Activated CD4-positive, alpha-beta T cell treated with anti-CD3 and anti-CD28 coated beads, Interleukin-2, amount 10 ng/mL, durations not matched to agents 24 days and 14 days (primary cell): ENCODE measurements at regions of chr2 and their contacts with region 1.

Region 1: DNA sequence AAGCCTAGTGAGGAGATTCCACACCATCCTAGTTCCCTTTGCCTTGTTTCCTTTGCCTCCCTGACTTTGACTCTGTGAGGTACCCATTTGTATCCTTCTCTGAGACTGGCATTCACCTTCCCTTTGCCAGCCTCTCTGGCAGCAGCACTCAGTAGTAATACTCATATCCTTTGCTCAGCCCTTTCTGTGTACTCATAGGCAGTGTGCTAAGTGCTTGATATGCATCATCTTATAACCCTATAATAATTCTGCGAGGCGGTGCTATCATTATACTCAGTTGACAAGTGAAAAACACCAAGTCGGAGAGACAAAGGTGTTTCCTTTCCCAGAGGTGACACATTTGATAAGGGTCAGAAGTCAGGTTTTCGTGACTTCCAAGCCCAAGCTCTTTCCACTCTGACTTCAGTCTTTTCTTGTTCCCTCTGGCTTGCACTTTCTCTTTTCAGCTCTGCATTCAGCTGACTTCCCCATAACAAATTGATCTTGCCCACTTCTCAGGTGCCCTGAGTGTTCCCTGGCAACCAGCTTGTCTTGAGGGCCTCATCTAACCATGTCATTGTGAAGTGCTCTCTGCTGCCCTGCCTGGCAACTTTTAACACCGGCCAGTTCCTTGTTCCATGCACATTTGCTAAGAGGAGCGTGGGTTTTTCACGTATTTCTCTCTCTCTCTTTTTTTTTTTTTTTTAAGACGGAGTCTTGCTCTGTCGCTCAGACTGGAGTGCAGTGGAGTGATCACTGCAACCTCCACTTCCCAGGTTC is 94.5 kb upstream of the UPP2 start:
- DNase-seq: peak; percentile 63
- H3K4me3 Mint-ChIP-seq: no peak overlapping the region
- H3K27ac Mint-ChIP-seq: no peak overlapping the region
- H3K4me1 Mint-ChIP-seq: peaks cover 18% of the 10 kb centered on the region
- H3K27me3 Mint-ChIP-seq: peaks cover 3% of the 10 kb centered on the region

Region 2: GRCh38 chr2:157492189-157492773 is 514.9 kb before region 1 on chr2:
- intact Hi-C with region 1: loop called (anchors 2 kb)
- DNase-seq: peak; percentile 91
- H3K4me3 Mint-ChIP-seq: no peak overlapping the region
- H3K27ac Mint-ChIP-seq: no peak overlapping the region
- H3K4me1 Mint-ChIP-seq: peaks cover 56% of the 10 kb centered on the region
- H3K27me3 Mint-ChIP-seq: no peaks in the 10 kb centered on the region

Region 3: GRCh38 chr2:157596992-157597681 is 410.0 kb before region 1 on chr2:
- intact Hi-C with region 1: loop called (anchors 5 kb)
- DNase-seq: peak; percentile 86
- H3K4me3 Mint-ChIP-seq: peak overlapping the region; percentile 73
- H3K27ac Mint-ChIP-seq: no peak overlapping the region
- H3K4me1 Mint-ChIP-seq: peaks cover 7% of the 10 kb centered on the region
- H3K27me3 Mint-ChIP-seq: peaks cover 35% of the 10 kb centered on the region

Region 4: GRCh38 chr2:157628477-157629415 is 378.4 kb before region 1 on chr2 and contains the start of gene ACVR1C:
- intact Hi-C with region 1: loop called (anchors 2 kb)
- DNase-seq: peak; percentile 90
- H3K4me3 Mint-ChIP-seq: peak within 1 kb of the TSS; percentile 91
- H3K27ac Mint-ChIP-seq: peak within 1 kb of the TSS; percentile 66
- H3K4me1 Mint-ChIP-seq: peaks cover 24% of the 10 kb centered on the region
- H3K27me3 Mint-ChIP-seq: peaks cover 27% of the 10 kb centered on the region
- total RNA-seq, gene ACVR1C: 0.98 and 1.0 TPM in 2 replicates

Region 5: DNA sequence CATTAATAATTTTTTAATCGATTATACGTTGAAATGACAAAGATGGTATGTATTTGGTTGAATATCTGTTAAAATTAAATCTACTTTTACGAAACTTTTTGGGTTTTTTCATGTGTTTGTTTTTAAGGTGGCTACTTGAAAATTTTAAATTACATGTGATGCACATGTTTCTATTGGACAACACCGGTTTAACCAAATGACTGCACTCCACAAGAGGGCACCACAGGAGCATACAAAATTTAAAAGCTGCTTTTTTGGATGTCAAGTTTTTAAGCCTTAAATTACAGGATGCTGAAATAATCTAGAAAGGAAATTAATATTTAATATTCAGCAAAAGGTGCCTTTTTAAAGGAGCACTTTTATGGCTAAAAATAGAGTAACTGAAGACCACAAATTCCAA is 229.7 kb before region 1 on chr2:
- intact Hi-C with region 1: loop called (anchors 1 kb)
- DNase-seq: peak; percentile 85
- H3K4me3 Mint-ChIP-seq: no peak overlapping the region
- H3K27ac Mint-ChIP-seq: no peak overlapping the region
- H3K4me1 Mint-ChIP-seq: peaks cover 29% of the 10 kb centered on the region
- H3K27me3 Mint-ChIP-seq: no peaks in the 10 kb centered on the region

Region 6: DNA sequence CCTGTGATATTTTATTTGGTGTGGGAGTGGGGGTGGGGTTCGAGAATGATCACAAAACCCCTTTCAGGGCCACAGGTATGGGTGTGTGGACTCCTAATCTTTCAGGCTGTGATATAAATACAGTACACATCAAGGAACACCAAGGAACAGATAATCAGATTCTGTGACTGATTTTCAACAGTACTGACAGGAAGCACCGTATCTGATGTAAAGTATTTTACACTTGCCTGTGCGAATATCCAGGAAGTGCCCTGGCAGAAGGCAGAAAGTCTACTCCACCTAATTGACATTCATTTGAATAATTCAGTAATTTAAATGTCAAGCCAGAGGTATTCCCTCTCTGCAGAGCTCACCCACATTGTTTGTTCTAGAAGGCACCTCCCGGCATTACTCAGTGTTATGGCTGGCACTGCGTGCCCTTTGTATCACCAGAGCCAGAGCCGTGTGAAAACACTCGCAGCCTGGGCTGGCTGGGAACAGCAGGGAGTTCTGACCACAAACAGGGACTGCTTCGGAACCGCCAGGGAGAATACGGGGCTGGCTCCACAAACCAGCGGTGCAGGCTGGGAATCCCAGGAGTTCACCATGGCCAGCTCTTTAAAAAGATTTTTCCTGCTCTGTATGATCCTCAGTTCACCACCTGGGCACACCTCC is 222.8 kb before region 1 on chr2:
- intact Hi-C with region 1: loop called (anchors 1 kb)
- DNase-seq: peak; percentile 67
- H3K4me3 Mint-ChIP-seq: peak overlapping the region; percentile 47
- H3K27ac Mint-ChIP-seq: peak overlapping the region; percentile 78
- H3K4me1 Mint-ChIP-seq: peaks cover 70% of the 10 kb centered on the region
- H3K27me3 Mint-ChIP-seq: no peaks in the 10 kb centered on the region